ENCODE measurements at regions of chr2 and their contacts with region 1.

Region 1: GRCh38 chr2:225668606-225669266 is 269.2 kb downstream of the NYAP2 start:
- DNase-seq: peak; percentile 81
- ATAC-seq: peak; percentile 94
- H3K4me3 ChIP-seq: no peak overlapping the region
- H3K27ac ChIP-seq: no peak overlapping the region
- H3K4me1 ChIP-seq: peaks cover under 1% of the 10 kb centered on the region; the same call in 1 of the 2 replicates
- H3K27me3 ChIP-seq: no peaks in the 10 kb centered on the region
- CTCF ChIP-seq: peak; percentile 82
- POLR2A ChIP-seq: no peak
- RAD21 ChIP-seq: peak; percentile 78

Region 2: GRCh38 chr2:225310745-225311144 is 358.0 kb before region 1 on chr2:
- CTCF ChIA-PET with region 1: no interaction called
- POLR2A ChIA-PET with region 1: no interaction called
- dilution Hi-C with region 1: no loop called
- in situ Hi-C with region 1: no loop called
- intact Hi-C with region 1: no loop called
- DNase-seq: no peak
- ATAC-seq: no peak
- H3K4me3 ChIP-seq: no peak overlapping the region
- H3K27ac ChIP-seq: no peak overlapping the region
- H3K4me1 ChIP-seq: no peaks in the 10 kb centered on the region
- H3K27me3 ChIP-seq: peaks cover 7% of the 10 kb centered on the region
- CTCF ChIP-seq: no peak
- POLR2A ChIP-seq: no peak
- RAD21 ChIP-seq: no peak

Region 3: GRCh38 chr2:226030788-226031646 is 362.3 kb after region 1 on chr2:
- CTCF ChIA-PET with region 1: no interaction called
- POLR2A ChIA-PET with region 1: no interaction called
- dilution Hi-C with region 1: no loop called
- in situ Hi-C with region 1: no loop called
- intact Hi-C with region 1: loop called (anchors 5 kb)
- DNase-seq: peak; percentile 69
- ATAC-seq: peak; percentile 92
- H3K4me3 ChIP-seq: peak overlapping the region; percentile 52
- H3K27ac ChIP-seq: peak overlapping the region; percentile 89
- H3K4me1 ChIP-seq: peaks cover 6% of the 10 kb centered on the region
- H3K27me3 ChIP-seq: no peaks in the 10 kb centered on the region
- CTCF ChIP-seq: no peak
- POLR2A ChIP-seq: no peak
- RAD21 ChIP-seq: peak; percentile 33

Region 4: DNA sequence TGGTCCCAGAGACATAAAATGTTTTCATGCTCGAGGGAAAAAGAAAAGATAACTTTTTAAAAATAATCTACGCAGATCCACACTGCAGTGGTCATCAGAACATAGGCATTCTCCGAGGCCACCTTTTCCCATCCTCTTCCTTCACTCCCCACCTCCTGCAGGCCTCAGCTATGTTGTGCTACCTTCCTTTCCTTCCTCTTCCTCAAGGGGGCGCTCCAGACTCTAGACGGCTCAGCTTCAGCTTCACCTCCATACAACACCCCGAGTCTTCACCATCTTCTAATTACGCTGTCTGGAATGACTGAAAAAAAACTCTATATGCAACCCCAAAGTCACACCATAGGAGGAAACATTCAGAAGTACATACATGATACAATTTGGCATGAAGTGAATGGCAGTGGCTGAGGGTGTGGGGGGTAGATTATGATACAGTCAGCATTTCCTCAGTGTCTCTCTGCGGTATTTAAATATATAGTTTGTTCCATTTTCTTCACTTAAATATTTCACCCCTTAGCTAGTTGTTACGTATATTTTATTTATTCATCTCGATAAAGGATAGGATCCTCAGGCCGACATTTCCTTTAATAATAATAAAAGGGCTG is 547.3 kb after region 1 on chr2:
- CTCF ChIA-PET with region 1: interaction called, 3 read pairs
- POLR2A ChIA-PET with region 1: no interaction called
- dilution Hi-C with region 1: no loop called
- in situ Hi-C with region 1: no loop called
- intact Hi-C with region 1: loop called (anchors 5 kb)
- DNase-seq: peak; percentile 54
- ATAC-seq: peak; percentile 64
- H3K4me3 ChIP-seq: no peak overlapping the region
- H3K27ac ChIP-seq: no peak overlapping the region
- H3K4me1 ChIP-seq: peaks cover 8% of the 10 kb centered on the region
- H3K27me3 ChIP-seq: no peaks in the 10 kb centered on the region
- CTCF ChIP-seq: peak; percentile 68
- POLR2A ChIP-seq: no peak
- RAD21 ChIP-seq: peak; percentile 74

Region 5: GRCh38 chr2:226661789-226662545 is 993.2 kb after region 1 on chr2:
- CTCF ChIA-PET with region 1: no interaction called
- POLR2A ChIA-PET with region 1: no interaction called
- dilution Hi-C with region 1: no loop called
- in situ Hi-C with region 1: no loop called
- intact Hi-C with region 1: loop called (anchors 10 kb)
- DNase-seq: peak; percentile 93
- ATAC-seq: peak; percentile 81
- H3K4me3 ChIP-seq: no peak overlapping the region
- H3K27ac ChIP-seq: peak overlapping the region; percentile 56; the same call in 1 of the 2 replicates
- H3K4me1 ChIP-seq: peaks cover 10% of the 10 kb centered on the region
- H3K27me3 ChIP-seq: no peaks in the 10 kb centered on the region
- CTCF ChIP-seq: no peak
- POLR2A ChIP-seq: no peak
- RAD21 ChIP-seq: no peak; the same call in 1 of the 2 replicates

Region 6: DNA sequence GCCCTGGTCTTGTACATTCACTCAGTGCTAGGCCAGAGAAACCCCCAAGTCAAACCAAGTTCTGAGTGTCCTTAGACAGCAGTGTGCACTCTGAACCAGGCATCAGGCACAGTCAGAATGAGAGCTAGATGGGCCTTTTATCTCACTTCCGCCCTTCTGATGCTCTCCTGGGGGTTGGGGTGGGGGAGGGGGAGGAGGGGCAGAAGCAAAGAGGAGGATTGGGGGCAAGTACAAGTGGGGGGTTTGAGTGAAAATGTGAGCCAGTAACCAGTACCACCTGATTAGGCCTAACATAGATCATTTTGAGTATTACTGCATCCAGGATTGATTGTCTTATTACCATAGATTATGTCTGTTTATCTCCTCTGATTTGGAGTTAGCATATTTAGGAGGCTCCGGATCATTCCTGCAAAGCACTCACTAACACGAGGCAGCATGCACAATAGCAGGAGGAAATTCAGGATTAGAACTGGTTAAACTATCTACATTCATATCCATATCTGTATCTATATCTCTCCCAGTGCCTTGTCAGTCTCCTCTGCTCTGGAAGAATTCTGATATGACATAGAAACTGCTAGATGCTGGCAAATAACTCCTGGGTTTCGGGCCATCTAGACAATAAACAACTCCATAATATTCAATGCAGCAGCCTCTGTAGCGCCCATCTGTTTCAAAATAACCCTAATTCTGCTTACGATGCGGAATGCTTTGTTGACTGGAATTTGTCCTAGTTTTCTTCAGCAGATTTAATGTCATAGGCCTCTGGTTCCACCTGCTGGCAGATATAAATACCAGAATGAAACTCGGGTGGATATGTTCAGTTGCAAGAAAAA is 1316.2 kb after region 1 on chr2:
- CTCF ChIA-PET with region 1: interaction called, 6 read pairs
- POLR2A ChIA-PET with region 1: no interaction called
- dilution Hi-C with region 1: no loop called
- in situ Hi-C with region 1: loop called (anchors 10 kb)
- intact Hi-C with region 1: loop called (anchors 1 kb)
- DNase-seq: peak; percentile 83
- ATAC-seq: peak; percentile 92
- H3K4me3 ChIP-seq: no peak overlapping the region
- H3K27ac ChIP-seq: no peak overlapping the region
- H3K4me1 ChIP-seq: 0 out of 2 replicates have a peak, but pooled peaks cover 4% of the 10 kb centered on the region
- H3K27me3 ChIP-seq: no peaks in the 10 kb centered on the region
- CTCF ChIP-seq: peak; percentile 86
- POLR2A ChIP-seq: 0 out of 2 replicates have a peak, but pooled peaks have one; percentile 24
- RAD21 ChIP-seq: peak; percentile 92

Measured in IMR-90 (cell line).